Cardiac septum (tissue), 1 donor: ENCODE measurements at regions of chr4 and their contacts with region 1.

Region 1: GRCh38 chr4:74675673-74676279 is 118.5 kb downstream of the BTC start:
- DNase-seq: no peak

Region 2: DNA sequence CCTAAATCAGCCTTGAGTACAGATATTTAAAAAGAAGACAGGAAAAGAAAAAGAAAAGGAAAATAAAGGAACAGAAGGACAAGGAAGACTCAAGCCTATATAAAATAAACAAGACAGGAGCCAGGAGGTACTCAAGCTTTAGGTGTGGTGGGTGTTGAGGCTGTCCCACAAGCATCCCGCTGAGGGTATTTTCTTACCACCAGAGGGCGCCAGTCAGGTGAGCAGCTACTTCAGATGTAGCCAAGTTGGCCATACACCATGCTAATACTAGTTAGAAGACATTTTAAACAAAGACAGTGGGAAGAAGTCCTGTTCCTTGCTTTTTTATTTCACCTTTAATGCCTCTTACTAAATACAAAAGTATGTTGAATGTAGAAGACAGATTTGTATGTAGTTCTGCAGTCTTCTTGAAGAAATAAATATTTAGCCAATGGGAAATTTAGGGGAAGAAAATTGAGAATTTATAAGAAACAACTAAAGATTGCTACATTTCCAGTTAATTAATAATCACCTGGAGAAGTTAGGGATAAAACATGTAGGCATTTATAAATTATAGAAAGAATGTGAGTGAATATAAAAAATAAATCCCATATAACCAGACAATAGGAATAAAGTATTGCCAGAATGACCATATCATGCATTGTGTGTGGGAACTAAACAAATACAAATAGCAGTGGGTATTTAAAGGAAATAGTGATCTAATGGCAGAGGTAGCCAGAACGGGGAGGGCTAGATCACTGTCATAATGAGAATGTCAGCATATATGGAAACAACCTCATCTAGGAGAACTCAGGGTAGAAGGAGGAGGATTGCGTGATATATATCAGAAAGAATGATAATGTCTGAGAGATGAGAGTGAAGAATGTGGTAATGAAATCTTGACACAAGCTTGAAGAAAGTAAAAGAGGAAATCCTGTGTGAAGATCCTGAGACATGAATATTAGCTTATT is 446.8 kb before region 1 on chr4:
- intact Hi-C with region 1: loop called (anchors 10 kb)
- DNase-seq: no peak

Region 3: DNA sequence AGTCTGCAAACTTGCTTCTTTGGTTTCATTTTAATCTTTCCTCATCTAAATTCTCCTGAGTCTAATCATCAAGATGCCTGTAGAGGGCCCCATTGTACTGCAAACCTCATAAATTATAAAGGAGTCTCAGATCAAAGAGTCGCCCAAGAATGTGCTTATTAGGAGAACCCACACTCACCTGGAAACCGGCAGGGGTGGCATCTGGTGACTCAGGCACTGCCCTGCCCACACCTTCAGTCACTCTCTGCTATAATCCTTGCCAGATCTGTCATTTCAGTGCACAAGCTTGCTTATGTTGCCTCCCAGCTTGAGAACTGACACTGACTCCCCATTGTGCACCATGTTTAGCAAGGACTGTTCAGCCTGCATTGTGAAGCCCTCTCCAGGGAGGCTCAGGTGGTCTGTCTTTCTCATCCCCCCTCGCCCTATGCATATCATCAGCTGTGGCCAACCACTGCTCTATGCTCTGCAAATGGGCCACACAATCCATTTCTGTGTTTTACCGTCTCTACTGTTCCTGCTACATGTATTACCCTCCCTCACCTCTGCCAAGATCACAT is 355.1 kb before region 1 on chr4:
- intact Hi-C with region 1: loop called (anchors 2 kb)
- DNase-seq: no peak

Region 4: GRCh38 chr4:74531963-74532794 is 143.6 kb before region 1 on chr4:
- intact Hi-C with region 1: loop called (anchors 10 kb)
- DNase-seq: no peak

Region 5: GRCh38 chr4:76197971-76198410 is 1522.2 kb after region 1 on chr4:
- intact Hi-C with region 1: no loop called
- DNase-seq: no peak